ENCODE measurements at regions of chr9 and their contacts with region 1.

Region 1: GRCh38 chr9:124880501-124880900 is 18.6 kb downstream of the ARPC5L start:
- DNase-seq: no peak
- ATAC-seq: no peak
- H3K4me3 ChIP-seq: no peak overlapping the region
- H3K27ac ChIP-seq: no peak overlapping the region
- H3K4me1 ChIP-seq: no peaks in the 10 kb centered on the region; a peak in 1 of 5 replicates
- H3K27me3 ChIP-seq: no peaks in the 10 kb centered on the region
- CTCF ChIP-seq: no peak
- EP300 ChIP-seq: no peak
- POLR2A ChIP-seq: no peak
- RAD21 ChIP-seq: no peak

Region 2: DNA sequence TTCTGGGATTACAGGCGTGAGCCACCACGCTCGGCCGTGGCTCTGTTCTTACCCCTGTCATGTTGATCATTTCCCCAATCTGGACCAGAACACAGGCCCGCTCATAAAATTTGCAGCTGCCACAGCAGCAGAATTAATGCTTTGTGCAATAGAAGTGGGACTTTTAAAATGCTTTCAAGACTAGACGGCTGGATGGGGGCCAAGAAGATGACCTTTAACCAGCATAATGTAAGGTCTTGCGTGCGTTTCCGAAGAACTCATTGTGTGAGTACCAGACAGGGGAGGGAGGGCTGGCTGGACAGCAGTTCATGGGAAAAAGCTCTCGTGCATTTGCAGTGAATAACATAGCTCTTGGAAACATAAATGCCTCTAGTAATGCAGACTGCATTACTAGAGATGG is 30.7 kb before region 1 on chr9:
- CTCF ChIA-PET with region 1: no interaction called
- POLR2A ChIA-PET with region 1: no interaction called
- in situ Hi-C with region 1: no loop called
- intact Hi-C with region 1: no loop called
- DNase-seq: no peak
- ATAC-seq: no peak
- H3K4me3 ChIP-seq: no peak overlapping the region
- H3K27ac ChIP-seq: no peak overlapping the region
- H3K4me1 ChIP-seq: peaks cover 0 to 23% of the 10 kb centered on the region in 2 experiments; a peak in 3 of 5 replicates
- H3K27me3 ChIP-seq: no peaks in the 10 kb centered on the region
- CTCF ChIP-seq: no peak
- EP300 ChIP-seq: no peak
- POLR2A ChIP-seq: no peak
- RAD21 ChIP-seq: no peak

Region 3: DNA sequence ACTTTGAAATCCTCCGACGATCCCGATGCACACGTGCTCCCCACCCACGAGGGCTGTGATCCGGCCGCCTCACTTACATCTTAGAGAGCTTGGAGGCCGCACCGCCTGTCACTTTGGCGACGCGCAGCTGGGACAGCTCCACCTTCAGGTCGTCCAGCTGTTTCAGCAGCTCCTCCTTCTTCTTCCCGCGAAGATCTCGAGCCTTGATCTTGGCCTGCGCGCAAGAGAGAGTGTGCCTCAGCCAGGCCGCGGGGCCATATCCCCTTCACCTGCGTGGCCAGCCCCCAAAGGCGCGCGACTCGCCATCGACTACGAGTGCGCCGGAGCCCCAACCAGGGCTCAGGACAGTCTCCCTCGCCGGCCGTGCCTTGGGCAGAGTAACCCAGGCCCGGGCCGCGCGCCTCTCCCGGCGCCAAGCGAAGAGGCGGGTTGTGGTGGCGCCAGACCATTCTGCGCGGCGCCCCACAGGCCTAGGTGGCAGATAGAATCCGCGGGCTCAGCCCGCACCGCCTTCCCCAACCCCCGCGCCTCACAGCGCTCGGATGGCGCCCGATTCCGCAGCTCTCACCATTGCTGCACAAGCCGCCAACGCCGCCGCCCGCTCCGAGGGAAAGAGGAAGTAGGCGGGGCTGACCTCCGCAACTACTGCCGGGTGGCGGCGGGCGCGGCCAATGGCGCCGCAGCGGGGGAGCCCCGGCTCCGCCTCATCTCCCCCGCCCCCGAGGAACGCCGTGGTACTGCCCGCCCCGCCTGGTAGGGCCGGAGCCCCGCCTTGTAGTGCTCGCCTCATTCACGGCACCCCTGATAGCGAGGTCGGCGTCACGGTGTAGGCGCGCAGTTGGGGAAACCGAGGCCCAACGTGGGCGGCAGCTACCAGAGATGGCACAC is 18.9 kb before region 1 on chr9 and contains the starts of genes ARPC5L and RPL35:
- CTCF ChIA-PET with region 1: no interaction called
- POLR2A ChIA-PET with region 1: interaction called, 30 read pairs
- in situ Hi-C with region 1: no loop called
- intact Hi-C with region 1: no loop called
- DNase-seq: peak; percentile 95 to 99 (median 96)
- ATAC-seq: peak; percentile 90
- H3K4me3 ChIP-seq: peak within 1 kb of the TSS; percentile 99
- H3K27ac ChIP-seq: peak within 1 kb of the TSS; percentile 94
- H3K4me1 ChIP-seq: peaks cover 23 to 42% of the 10 kb centered on the region in 2 experiments
- H3K27me3 ChIP-seq: no peaks in the 10 kb centered on the region
- CTCF ChIP-seq: peak; percentile 15 to 55 (median 33); a peak in 4 of 6 replicates
- EP300 ChIP-seq: no peak; the same call in 1 of the 2 replicates
- POLR2A ChIP-seq: peak; percentile 97
- RAD21 ChIP-seq: no peak
- polyA plus RNA-seq, gene ARPC5L: 25.4 to 26.3 TPM
- polyA plus RNA-seq, gene RPL35: 4,709 to 5,101 TPM

Region 4: DNA sequence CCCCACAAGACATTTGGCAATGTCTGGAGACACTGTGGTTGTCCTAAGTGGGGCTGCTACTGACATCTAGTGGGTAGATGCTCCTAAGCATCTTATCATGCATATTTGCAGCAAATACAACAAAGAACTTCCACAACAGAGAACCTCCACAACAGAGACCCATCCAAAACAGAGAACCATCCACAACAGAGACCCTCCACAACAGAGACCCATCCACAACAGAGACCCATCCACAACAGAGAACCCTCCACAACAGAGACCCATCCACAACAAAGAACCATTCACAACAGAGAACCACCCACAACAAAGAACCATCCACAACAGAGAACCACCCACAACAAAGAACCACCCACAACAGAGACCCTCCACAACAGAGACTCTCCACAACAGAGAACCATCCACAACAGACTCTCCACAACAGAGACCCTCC is 14.3 kb after region 1 on chr9:
- CTCF ChIA-PET with region 1: no interaction called
- POLR2A ChIA-PET with region 1: interaction called, 18 read pairs
- in situ Hi-C with region 1: no loop called
- intact Hi-C with region 1: no loop called
- DNase-seq: peak in 1 of 4 experiments; percentile 45
- ATAC-seq: peak; percentile 79
- H3K4me3 ChIP-seq: no peak overlapping the region
- H3K27ac ChIP-seq: no peak overlapping the region
- H3K4me1 ChIP-seq: peaks cover 8 to 11% of the 10 kb centered on the region in 2 experiments; a peak in 4 of 5 replicates
- H3K27me3 ChIP-seq: no peaks in the 10 kb centered on the region
- CTCF ChIP-seq: peak; percentile 52 to 67 (median 53); a peak in 5 of 6 replicates
- EP300 ChIP-seq: no peak
- POLR2A ChIP-seq: no peak
- RAD21 ChIP-seq: peak; percentile 43 to 58; a peak in 3 of 4 replicates

Region 5: GRCh38 chr9:124899845-124900244 is 19.3 kb after region 1 on chr9:
- CTCF ChIA-PET with region 1: no interaction called
- POLR2A ChIA-PET with region 1: interaction called, 10 read pairs
- in situ Hi-C with region 1: no loop called
- intact Hi-C with region 1: no loop called
- DNase-seq: peak; percentile 46 to 87 (median 62)
- ATAC-seq: peak; percentile 90
- H3K4me3 ChIP-seq: no peak overlapping the region
- H3K27ac ChIP-seq: peak overlapping the region; percentile 2; the same call in 2 of the 3 replicates
- H3K4me1 ChIP-seq: peaks cover 14 to 17% of the 10 kb centered on the region in 2 experiments; a peak in 4 of 5 replicates
- H3K27me3 ChIP-seq: no peaks in the 10 kb centered on the region
- CTCF ChIP-seq: no peak
- EP300 ChIP-seq: peak; percentile 45
- POLR2A ChIP-seq: no peak
- RAD21 ChIP-seq: peak in 1 of 2 experiments; percentile 13; a peak in 1 of 4 replicates

Region 6: DNA sequence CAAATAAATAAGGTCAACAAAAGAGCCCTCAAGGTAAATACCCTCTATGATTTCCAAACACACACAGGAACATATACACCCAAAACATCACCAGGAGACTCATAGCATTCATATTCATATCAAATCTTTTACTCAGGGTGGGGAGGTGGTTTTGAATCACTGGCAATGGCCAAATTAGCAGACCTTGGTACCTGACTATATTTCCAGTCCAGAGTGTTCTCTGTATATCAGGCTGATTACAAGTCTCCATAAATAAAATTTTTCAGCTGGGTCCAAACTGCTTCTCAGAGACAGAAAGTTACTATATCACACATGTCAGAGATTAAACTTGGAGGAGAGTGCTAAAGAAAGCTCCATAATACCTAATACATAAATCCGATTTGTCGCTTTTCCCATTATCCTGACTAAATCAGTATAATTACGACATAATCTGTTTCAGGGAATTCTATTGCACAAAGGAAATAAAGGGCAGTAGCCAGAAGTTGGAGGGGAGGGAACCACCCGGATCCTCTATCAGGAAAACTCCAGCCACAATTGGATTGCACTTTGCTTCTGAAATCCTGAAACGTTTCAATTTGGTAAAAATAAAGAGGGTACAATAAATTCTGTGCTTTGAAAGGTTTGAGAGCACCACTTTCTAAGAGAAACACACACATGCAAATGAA is 67.4 kb after region 1 on chr9:
- CTCF ChIA-PET with region 1: no interaction called
- POLR2A ChIA-PET with region 1: no interaction called
- in situ Hi-C with region 1: no loop called
- intact Hi-C with region 1: no loop called
- DNase-seq: no peak
- ATAC-seq: no peak
- H3K4me3 ChIP-seq: no peak overlapping the region
- H3K27ac ChIP-seq: no peak overlapping the region
- H3K4me1 ChIP-seq: no peaks in the 10 kb centered on the region
- H3K27me3 ChIP-seq: no peaks in the 10 kb centered on the region
- CTCF ChIP-seq: no peak
- EP300 ChIP-seq: no peak
- POLR2A ChIP-seq: no peak
- RAD21 ChIP-seq: no peak

Region 7: GRCh38 chr9:125227761-125228160 is 347.3 kb after region 1 on chr9:
- CTCF ChIA-PET with region 1: no interaction called
- POLR2A ChIA-PET with region 1: no interaction called
- in situ Hi-C with region 1: no loop called
- intact Hi-C with region 1: no loop called
- DNase-seq: peak in 1 of 4 experiments; percentile 4
- ATAC-seq: no peak
- H3K4me3 ChIP-seq: no peak overlapping the region
- H3K27ac ChIP-seq: no peak overlapping the region
- H3K4me1 ChIP-seq: no peaks in the 10 kb centered on the region
- H3K27me3 ChIP-seq: no peaks in the 10 kb centered on the region
- CTCF ChIP-seq: no peak
- EP300 ChIP-seq: no peak
- POLR2A ChIP-seq: no peak
- RAD21 ChIP-seq: no peak

Region 8: GRCh38 chr9:125904155-125904851 is 1023.8 kb after region 1 on chr9:
- CTCF ChIA-PET with region 1: no interaction called
- POLR2A ChIA-PET with region 1: no interaction called
- in situ Hi-C with region 1: loop called (anchors 10 kb)
- intact Hi-C with region 1: no loop called
- DNase-seq: no peak
- ATAC-seq: no peak
- H3K4me3 ChIP-seq: no peak overlapping the region
- H3K27ac ChIP-seq: no peak overlapping the region
- H3K4me1 ChIP-seq: no peaks in the 10 kb centered on the region
- H3K27me3 ChIP-seq: peaks cover 0 to 3% of the 10 kb centered on the region in 2 experiments; a peak in 1 of 5 replicates
- CTCF ChIP-seq: no peak
- EP300 ChIP-seq: no peak
- POLR2A ChIP-seq: no peak
- RAD21 ChIP-seq: no peak

Measured in K562 (cell line).